Caco-2 (cell line): ENCODE measurements at regions of chr1 and their contacts with region 1.

Region 1: DNA sequence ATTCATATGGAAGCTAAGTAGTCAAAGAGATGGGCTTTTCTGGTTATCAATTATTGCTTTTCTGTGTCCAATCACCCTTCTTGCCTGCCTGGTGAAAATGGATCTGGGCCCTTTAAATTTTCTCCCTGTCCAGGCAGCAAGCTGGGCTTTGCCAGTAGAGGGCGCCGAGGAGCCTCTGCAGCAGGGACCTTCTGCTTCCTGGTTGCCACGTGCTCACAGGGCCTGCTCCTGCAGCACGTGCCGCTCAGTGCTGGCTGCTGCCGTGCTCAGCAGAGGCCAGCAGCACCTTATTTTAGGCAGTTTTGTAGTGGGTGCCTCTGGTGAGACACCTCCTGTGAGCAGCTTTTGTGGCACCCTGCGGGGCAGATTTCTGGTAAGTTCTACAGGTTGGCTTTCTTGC is 4.0 kb downstream of the ACTL8 start:
- DNase-seq: peak; percentile 62 to 85
- H3K4me3 ChIP-seq: peak overlapping the region; percentile 32
- H3K4me3 Mint-ChIP-seq: peak overlapping the region; percentile 63
- H3K27ac Mint-ChIP-seq: no peak overlapping the region
- H3K4me1 ChIP-seq: no peaks in the 10 kb centered on the region
- H3K4me1 Mint-ChIP-seq: no peaks in the 10 kb centered on the region
- H3K27me3 ChIP-seq: no peaks in the 10 kb centered on the region
- H3K27me3 Mint-ChIP-seq: no peaks in the 10 kb centered on the region
- CTCF ChIP-seq: peak; percentile 59 to 71

Region 2: DNA sequence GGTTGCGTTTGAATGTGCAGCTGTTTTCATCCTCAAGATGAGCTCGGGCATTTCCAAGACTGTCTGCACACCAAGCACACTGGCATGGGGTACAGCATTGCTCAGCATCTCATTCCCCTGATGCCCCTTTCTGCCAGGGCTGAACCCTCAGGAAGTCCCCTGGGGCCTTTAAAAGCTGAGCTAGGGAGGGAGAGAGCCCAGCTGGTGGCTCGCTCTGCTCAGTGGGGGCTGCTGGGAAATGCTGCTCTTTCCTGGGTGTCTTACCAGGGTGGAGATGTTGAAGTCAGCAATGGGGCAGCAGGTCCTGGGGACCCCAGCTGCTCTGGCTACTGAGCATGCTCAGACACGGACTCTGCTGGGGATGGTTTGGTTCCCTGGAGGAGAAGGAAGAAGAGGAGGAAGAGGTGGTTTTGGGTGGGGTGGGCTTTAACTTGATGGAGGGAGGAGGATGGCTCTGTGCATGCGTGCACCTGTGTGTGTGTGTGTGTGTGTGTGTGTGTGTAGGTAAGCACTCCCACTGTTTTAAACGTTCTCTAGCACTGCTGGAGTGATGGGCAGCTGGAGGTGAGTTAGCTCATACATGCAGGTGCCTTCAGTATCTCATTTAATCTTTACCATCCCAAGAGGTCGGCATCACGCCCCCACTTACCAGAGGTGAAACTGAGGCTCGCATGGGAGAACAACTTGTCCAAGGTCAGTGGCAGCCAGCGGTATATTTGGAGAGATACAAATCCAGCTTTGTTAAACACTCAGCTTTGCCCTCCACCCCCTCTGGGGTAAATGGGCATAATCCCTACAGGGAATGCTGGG is 36.9 kb after region 1 on chr1:
- CTCF ChIA-PET with region 1: no interaction called
- POLR2A ChIA-PET with region 1: no interaction called
- intact Hi-C with region 1: loop called (anchors 5 kb)
- DNase-seq: no peak
- H3K4me3 ChIP-seq: no peak overlapping the region
- H3K4me3 Mint-ChIP-seq: no peak overlapping the region
- H3K27ac Mint-ChIP-seq: no peak overlapping the region
- H3K4me1 ChIP-seq: peaks cover 8% of the 10 kb centered on the region; the same call in 1 of the 2 replicates
- H3K4me1 Mint-ChIP-seq: no peaks in the 10 kb centered on the region
- H3K27me3 ChIP-seq: no peaks in the 10 kb centered on the region
- H3K27me3 Mint-ChIP-seq: peaks cover 7% of the 10 kb centered on the region
- CTCF ChIP-seq: no peak

Region 3: DNA sequence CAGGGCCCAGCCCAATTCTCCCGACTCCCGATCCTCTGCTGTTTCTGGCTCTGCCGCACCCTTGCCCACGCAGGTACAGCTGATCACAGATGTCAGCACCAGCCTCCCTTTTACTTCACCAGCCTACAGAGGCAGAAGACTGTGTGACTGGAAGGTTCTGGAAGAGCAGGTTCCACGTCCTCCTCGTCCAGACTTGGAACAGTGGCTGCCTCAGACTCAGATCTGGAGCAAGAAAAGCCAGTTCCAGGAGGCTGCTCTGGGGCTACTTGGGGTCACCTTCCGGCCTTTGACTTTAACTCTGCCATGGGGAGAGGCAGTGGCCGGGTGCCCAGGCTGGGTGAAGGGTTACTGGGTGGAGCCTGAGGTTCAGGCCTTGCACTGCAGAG is 705.5 kb after region 1 on chr1:
- CTCF ChIA-PET with region 1: no interaction called
- POLR2A ChIA-PET with region 1: no interaction called
- intact Hi-C with region 1: no loop called
- DNase-seq: peak; percentile 16 to 38
- H3K4me3 ChIP-seq: no peak overlapping the region
- H3K4me3 Mint-ChIP-seq: no peak overlapping the region
- H3K27ac Mint-ChIP-seq: no peak overlapping the region
- H3K4me1 ChIP-seq: peaks cover 4% of the 10 kb centered on the region; the same call in 1 of the 2 replicates
- H3K4me1 Mint-ChIP-seq: no peaks in the 10 kb centered on the region
- H3K27me3 ChIP-seq: no peaks in the 10 kb centered on the region
- H3K27me3 Mint-ChIP-seq: peaks cover 12% of the 10 kb centered on the region
- CTCF ChIP-seq: no peak